ENCODE measurements at regions of chr6 and their contacts with region 1.

Region 1: GRCh38 chr6:137791281-137792159 is 75.5 kb upstream of the TNFAIP3 start:
- DNase-seq: no peak
- H3K4me3 Mint-ChIP-seq: peak overlapping the region; percentile 53
- H3K27ac Mint-ChIP-seq: peak overlapping the region; percentile 5
- H3K4me1 Mint-ChIP-seq: peaks cover 61% of the 10 kb centered on the region
- H3K27me3 Mint-ChIP-seq: no peaks in the 10 kb centered on the region

Region 2: GRCh38 chr6:136761227-136761922 is 1030.1 kb before region 1 on chr6:
- CTCF ChIA-PET with region 1: no interaction called
- POLR2A ChIA-PET with region 1: no interaction called
- DNase-seq: peak; percentile 35
- H3K4me3 Mint-ChIP-seq: peak overlapping the region; percentile 20
- H3K27ac Mint-ChIP-seq: peak overlapping the region; percentile 62
- H3K4me1 Mint-ChIP-seq: peaks cover 68% of the 10 kb centered on the region
- H3K27me3 Mint-ChIP-seq: no peaks in the 10 kb centered on the region

Region 3: GRCh38 chr6:137570393-137570792 is 221.1 kb before region 1 on chr6:
- CTCF ChIA-PET with region 1: no interaction called
- POLR2A ChIA-PET with region 1: no interaction called
- DNase-seq: no peak
- H3K4me3 Mint-ChIP-seq: no peak overlapping the region
- H3K27ac Mint-ChIP-seq: no peak overlapping the region
- H3K4me1 Mint-ChIP-seq: peaks cover 9% of the 10 kb centered on the region
- H3K27me3 Mint-ChIP-seq: peaks cover 64% of the 10 kb centered on the region

Region 4: DNA sequence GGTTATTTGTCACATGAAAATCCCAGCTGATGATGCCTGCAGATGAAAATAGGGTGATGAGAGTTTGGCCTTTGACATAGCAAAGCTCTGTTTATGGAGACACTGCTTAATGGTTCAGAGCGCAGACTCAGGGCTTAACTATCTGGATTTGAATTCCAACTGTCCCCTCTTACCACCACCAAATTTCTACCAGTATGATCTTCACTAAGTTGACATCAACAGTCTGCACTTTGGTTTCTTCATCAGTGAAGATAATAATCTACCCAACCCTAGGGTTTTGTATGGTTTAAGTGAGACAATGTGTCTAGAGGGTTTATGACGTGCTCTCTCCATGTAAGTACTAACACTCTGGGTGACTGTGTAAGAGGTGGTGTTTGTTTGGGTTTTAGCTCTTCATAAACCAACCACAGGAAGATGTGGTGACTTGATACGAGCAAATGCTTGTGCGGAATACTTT is 75.9 kb before region 1 on chr6:
- CTCF ChIA-PET with region 1: no interaction called
- POLR2A ChIA-PET with region 1: no interaction called
- DNase-seq: peak; percentile 64
- H3K4me3 Mint-ChIP-seq: no peak overlapping the region
- H3K27ac Mint-ChIP-seq: peak overlapping the region; percentile 89
- H3K4me1 Mint-ChIP-seq: peaks cover 63% of the 10 kb centered on the region
- H3K27me3 Mint-ChIP-seq: no peaks in the 10 kb centered on the region

Region 5: GRCh38 chr6:137859025-137859424 is 67.5 kb after region 1 on chr6:
- CTCF ChIA-PET with region 1: no interaction called
- POLR2A ChIA-PET with region 1: interaction called, 10 read pairs
- DNase-seq: no peak
- H3K4me3 Mint-ChIP-seq: no peak overlapping the region
- H3K27ac Mint-ChIP-seq: no peak overlapping the region
- H3K4me1 Mint-ChIP-seq: peaks cover 14% of the 10 kb centered on the region
- H3K27me3 Mint-ChIP-seq: no peaks in the 10 kb centered on the region